ENCODE measurements at regions of chr18 and their contacts with region 1.

Region 1: DNA sequence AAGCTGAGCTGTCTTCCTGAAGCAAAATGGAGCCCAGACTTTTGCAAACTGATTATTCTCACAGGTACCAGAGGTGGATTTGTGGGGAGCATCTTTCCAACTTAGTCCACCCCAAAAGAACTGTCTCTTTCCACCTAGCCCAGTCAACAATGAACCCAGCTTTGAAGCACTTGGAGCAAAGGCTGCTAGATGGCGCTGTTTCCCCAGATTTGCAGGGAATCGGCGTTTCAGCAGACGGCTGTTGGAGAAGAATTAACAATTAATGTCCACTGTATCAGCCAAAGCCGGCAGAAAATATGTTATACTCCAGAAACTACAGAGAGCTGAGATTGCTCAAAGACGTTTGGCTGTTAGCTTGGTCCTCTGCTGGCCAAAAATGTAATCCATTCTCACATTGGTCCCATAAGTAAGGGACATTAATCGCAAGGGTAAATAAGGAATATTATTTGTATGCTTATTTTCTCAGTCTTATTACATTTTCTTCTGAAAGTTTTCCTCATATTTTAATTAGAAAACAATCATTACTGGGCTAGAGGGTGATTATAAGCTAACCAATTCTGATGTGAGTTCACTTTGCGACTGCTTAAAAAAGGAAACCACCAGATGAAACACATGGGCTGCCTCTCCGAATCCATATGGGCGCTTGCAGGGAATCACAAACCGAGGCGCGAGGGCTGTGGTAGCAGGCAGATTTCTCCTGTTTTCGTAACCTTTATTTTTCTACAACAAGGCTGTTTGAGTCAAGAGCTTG is 423.8 kb upstream of the MEX3C start:
- H3K4me3 ChIP-seq: no peak overlapping the region
- H3K27ac ChIP-seq: no peak overlapping the region
- H3K4me1 ChIP-seq: no peaks in the 10 kb centered on the region
- CTCF ChIP-seq: peak; percentile 36; the same call in 1 of the 2 replicates

Region 2: DNA sequence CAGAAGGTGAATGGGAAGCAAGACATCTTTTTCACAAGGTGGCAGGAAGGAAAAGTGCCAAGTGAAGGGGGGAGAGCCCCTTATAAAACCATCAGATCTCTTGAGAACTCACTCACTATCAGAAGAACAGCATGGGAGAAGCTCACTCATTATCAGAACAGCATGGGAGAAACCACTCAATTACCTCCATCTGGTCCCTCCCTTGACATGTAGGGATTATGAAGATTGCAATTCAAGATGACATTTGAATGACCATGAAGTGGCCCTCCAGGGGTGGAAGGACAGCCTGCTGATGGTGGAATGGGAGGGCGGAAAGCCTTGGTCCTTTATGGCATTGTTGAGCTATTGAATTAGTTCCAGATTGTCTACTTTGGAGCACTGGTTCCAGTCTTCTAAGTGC is 10.8 kb before region 1 on chr18:
- CTCF ChIA-PET with region 1: interaction called, 18 read pairs
- POLR2A ChIA-PET with region 1: no interaction called
- H3K4me3 ChIP-seq: no peak overlapping the region
- H3K27ac ChIP-seq: no peak overlapping the region
- H3K4me1 ChIP-seq: no peaks in the 10 kb centered on the region
- CTCF ChIP-seq: no peak

Region 3: GRCh38 chr18:51639541-51639940 is 18.3 kb after region 1 on chr18:
- CTCF ChIA-PET with region 1: interaction called, 14 read pairs
- POLR2A ChIA-PET with region 1: no interaction called
- H3K4me3 ChIP-seq: no peak overlapping the region
- H3K27ac ChIP-seq: no peak overlapping the region
- H3K4me1 ChIP-seq: no peaks in the 10 kb centered on the region
- CTCF ChIP-seq: no peak

Region 4: DNA sequence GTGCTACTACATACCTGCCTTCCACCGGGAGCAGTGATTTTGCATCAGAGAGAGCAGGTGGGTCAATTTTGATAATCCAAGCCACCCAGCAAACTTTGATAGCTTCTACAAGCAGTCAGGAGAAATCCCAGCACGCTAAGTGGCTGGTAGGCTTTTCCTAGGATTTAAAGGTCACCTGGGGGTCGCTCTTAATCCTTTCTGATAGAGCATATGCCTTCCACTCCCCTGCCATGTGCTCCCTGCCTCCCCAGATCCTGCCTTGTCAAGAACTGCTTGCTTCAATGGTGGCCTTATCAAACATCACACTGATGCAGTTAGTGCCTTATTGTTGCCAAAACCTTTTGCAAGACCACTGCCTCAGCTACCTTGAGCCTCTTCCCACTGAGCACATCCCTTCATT is 38.5 kb after region 1 on chr18:
- CTCF ChIA-PET with region 1: no interaction called
- POLR2A ChIA-PET with region 1: no interaction called
- H3K4me3 ChIP-seq: no peak overlapping the region
- H3K27ac ChIP-seq: no peak overlapping the region
- H3K4me1 ChIP-seq: no peaks in the 10 kb centered on the region; the same call in 1 of the 2 replicates
- CTCF ChIP-seq: no peak

Measured in HEK293 (cell line).